Activated CD4-positive, alpha-beta T cell treated with anti-CD3 and anti-CD28 coated beads, Interleukin-2, amount 10 ng/mL, durations not matched to agents 24 days and 14 days (primary cell): ENCODE measurements at regions of chr2 and their contacts with region 1.

Region 1: DNA sequence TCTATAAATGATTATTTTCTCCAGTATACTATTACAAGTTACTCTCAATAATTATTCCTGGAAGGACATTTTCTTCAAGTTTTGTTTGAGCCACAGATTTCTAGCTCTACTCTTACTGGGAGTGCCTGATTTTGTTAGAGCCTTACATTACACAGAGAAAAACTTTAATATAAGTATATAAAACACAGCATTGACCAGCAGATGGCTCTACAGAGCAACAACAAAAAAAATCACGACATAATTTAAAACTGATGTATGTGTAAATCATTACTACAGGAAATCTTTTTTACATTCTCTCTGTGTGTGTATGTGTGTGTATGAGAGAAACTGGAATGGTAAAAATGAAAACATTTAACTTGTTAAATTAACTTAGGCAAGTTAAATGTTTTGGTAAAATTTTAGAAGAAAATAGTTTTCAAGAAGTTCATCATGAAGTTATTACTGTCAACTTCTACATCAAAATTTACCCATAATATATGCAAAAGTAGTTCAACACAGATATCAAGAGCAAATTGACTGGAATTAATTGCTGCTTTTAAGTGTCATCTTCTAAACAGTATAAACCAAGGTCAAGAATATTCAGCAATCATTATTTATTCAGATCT is 103.3 kb downstream of the MDH1 start:
- DNase-seq: peak; percentile 78
- H3K4me3 Mint-ChIP-seq: no peak overlapping the region
- H3K27ac Mint-ChIP-seq: no peak overlapping the region
- H3K4me1 Mint-ChIP-seq: no peaks in the 10 kb centered on the region
- H3K27me3 Mint-ChIP-seq: peaks cover 12% of the 10 kb centered on the region

Region 2: GRCh38 chr2:63780483-63781155 is 88.5 kb after region 1 on chr2:
- intact Hi-C with region 1: no loop called
- DNase-seq: no peak
- H3K4me3 Mint-ChIP-seq: no peak overlapping the region
- H3K27ac Mint-ChIP-seq: no peak overlapping the region
- H3K4me1 Mint-ChIP-seq: no peaks in the 10 kb centered on the region
- H3K27me3 Mint-ChIP-seq: peaks cover 28% of the 10 kb centered on the region

Region 3: GRCh38 chr2:63861220-63861822 is 169.2 kb after region 1 on chr2:
- intact Hi-C with region 1: loop called (anchors 1 kb)
- DNase-seq: peak; percentile 85
- H3K4me3 Mint-ChIP-seq: no peak overlapping the region
- H3K27ac Mint-ChIP-seq: no peak overlapping the region
- H3K4me1 Mint-ChIP-seq: peaks cover 46% of the 10 kb centered on the region
- H3K27me3 Mint-ChIP-seq: no peaks in the 10 kb centered on the region

Region 4: GRCh38 chr2:63888490-63889402 is 196.6 kb after region 1 on chr2:
- intact Hi-C with region 1: loop called (anchors 1 kb)
- DNase-seq: peak; percentile 82
- H3K4me3 Mint-ChIP-seq: no peak overlapping the region
- H3K27ac Mint-ChIP-seq: peak overlapping the region; percentile 31
- H3K4me1 Mint-ChIP-seq: peaks cover 7% of the 10 kb centered on the region
- H3K27me3 Mint-ChIP-seq: no peaks in the 10 kb centered on the region